ENCODE measurements at regions of chr1 and their contacts with region 1.

Region 1: GRCh38 chr1:150696590-150697524 is at the start of gene GOLPH3L:
- DNase-seq: peak; percentile 99
- ATAC-seq: peak; percentile 100
- H3K4me3 ChIP-seq: peak within 1 kb of the TSS; percentile 72
- H3K27ac ChIP-seq: peak within 1 kb of the TSS; percentile 45
- H3K4me1 ChIP-seq: peaks cover 3% of the 10 kb centered on the region; the same call in 1 of the 2 replicates
- H3K27me3 ChIP-seq: no peaks in the 10 kb centered on the region
- CTCF ChIP-seq: no peak
- EP300 ChIP-seq: no peak
- POLR2A ChIP-seq: peak; percentile 36; the same call in 1 of the 2 replicates
- RAD21 ChIP-seq: no peak
- polyA plus RNA-seq, gene GOLPH3L: 11.8 to 12.1 TPM

Region 2: DNA sequence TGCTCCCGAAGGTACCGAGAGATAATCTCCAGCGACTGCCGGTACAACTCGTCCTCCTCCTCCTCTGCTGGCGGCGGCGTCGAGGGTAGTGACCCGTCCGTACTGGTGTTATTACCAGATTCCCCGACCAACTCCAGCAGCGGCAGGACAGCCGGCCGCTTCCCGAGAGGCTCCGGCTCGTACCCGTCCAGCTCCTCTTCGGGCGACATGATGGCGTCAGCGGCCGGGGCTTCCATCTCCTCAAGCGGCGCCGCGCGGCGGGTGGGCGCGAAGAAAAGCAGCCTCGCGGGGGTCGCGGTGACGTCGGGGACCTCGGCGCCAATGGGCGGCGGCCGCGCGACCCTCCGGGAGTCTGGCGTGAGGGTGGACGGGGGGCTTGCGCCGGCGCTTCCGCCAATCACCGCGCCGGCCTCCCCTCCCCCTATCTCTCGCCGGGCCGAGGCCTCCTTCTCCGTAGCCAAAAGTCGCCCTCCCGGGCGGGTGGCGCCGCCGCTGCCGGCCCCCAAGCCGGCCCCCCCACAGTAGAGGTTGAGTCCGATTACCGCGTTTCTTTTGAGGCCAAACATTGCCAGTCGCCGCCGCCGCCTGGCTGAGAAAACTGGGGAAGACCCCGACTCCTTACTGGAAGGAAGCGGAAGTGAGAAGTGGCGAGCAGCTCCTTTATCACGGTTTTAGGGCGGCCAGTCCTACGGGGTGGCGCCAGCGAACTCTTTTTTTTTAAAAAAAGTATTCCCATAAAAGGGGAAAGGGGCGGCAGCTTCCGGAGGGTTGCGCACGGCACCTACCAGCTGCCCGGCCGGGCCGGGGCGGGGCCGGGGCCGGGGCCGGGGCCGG is 117.7 kb before region 1 on chr1 and contains the start of gene MCL1:
- CTCF ChIA-PET with region 1: no interaction called
- POLR2A ChIA-PET with region 1: interaction called, 3 read pairs
- RAD21 ChIA-PET with region 1: interaction called, 20 read pairs
- SMC1A ChIA-PET with region 1: interaction called, 5 read pairs
- in situ Hi-C with region 1: no loop called
- intact Hi-C with region 1: no loop called
- DNase-seq: peak; percentile 69
- ATAC-seq: peak; percentile 90
- H3K4me3 ChIP-seq: peak within 1 kb of the TSS; percentile 85
- H3K27ac ChIP-seq: peak within 1 kb of the TSS; percentile 96
- H3K4me1 ChIP-seq: peaks cover 3% of the 10 kb centered on the region; the same call in 1 of the 2 replicates
- H3K27me3 ChIP-seq: no peaks in the 10 kb centered on the region
- CTCF ChIP-seq: no peak
- EP300 ChIP-seq: peak in 1 of 2 experiments; percentile 47; a peak in 1 of 4 replicates
- POLR2A ChIP-seq: peak; percentile 94
- RAD21 ChIP-seq: 0 out of 2 replicates have a peak, but pooled peaks have one; percentile 15
- polyA plus RNA-seq, gene MCL1: 18.1 to 25.5 TPM

Region 3: GRCh38 chr1:150683914-150684313 is 12.9 kb before region 1 on chr1:
- CTCF ChIA-PET with region 1: interaction called, 6 read pairs
- POLR2A ChIA-PET with region 1: interaction called, 7 read pairs
- RAD21 ChIA-PET with region 1: interaction called, 5 read pairs
- SMC1A ChIA-PET with region 1: interaction called, 11 read pairs
- in situ Hi-C with region 1: no loop called
- intact Hi-C with region 1: no loop called
- DNase-seq: peak; percentile 11
- ATAC-seq: peak; percentile 69
- H3K4me3 ChIP-seq: no peak overlapping the region
- H3K27ac ChIP-seq: no peak overlapping the region; the same call in 1 of the 2 replicates
- H3K4me1 ChIP-seq: peaks cover 4% of the 10 kb centered on the region
- H3K27me3 ChIP-seq: no peaks in the 10 kb centered on the region
- CTCF ChIP-seq: no peak
- EP300 ChIP-seq: no peak
- POLR2A ChIP-seq: no peak
- RAD21 ChIP-seq: no peak

Region 4: GRCh38 chr1:150708595-150708994 is 11.7 kb after region 1 on chr1:
- CTCF ChIA-PET with region 1: interaction called, 18 read pairs
- POLR2A ChIA-PET with region 1: interaction called, 6 read pairs
- RAD21 ChIA-PET with region 1: interaction called, 9 read pairs
- SMC1A ChIA-PET with region 1: interaction called, 20 read pairs
- in situ Hi-C with region 1: no loop called
- intact Hi-C with region 1: no loop called
- DNase-seq: peak; percentile 23
- ATAC-seq: peak; percentile 99
- H3K4me3 ChIP-seq: no peak overlapping the region
- H3K27ac ChIP-seq: no peak overlapping the region
- H3K4me1 ChIP-seq: peaks cover 7% of the 10 kb centered on the region; the same call in 1 of the 2 replicates
- H3K27me3 ChIP-seq: no peaks in the 10 kb centered on the region; a peak in 1 of 4 replicates
- CTCF ChIP-seq: no peak
- EP300 ChIP-seq: peak in 1 of 2 experiments; percentile 49; a peak in 2 of 4 replicates
- POLR2A ChIP-seq: no peak
- RAD21 ChIP-seq: no peak

Region 5: DNA sequence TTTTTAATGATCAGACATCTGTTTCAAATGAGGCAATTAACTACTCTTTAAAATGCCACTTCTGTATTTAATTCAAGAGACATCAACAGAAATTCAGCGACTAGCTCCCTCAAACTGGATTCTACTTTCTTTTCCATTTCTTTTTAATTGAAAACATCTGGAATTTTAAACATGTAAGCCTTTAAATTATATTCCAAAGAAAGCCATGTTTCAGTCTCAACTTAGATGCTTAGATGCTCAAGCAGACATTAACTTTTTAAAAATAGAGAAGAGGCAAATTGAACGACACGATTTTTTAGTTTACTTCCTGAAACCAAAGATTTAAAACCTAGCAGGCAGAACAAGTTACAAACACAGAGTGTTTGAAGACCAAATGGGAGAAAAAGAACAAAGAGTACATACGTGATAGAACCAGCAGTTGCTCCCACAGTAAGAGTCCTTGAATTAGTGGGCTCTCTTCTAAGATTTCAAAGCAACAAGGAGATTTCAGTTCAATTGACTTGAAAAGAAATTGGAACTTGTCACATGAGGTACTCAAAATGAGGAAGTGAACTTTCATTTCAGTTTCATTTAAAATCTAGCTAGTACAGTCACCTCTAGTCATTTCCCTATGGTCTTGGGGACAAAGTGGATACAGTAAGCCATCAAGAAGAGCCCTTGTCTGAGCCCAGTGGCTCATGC is 68.6 kb after region 1 on chr1 and contains the start of gene CTSS:
- CTCF ChIA-PET with region 1: interaction called, 5 read pairs
- POLR2A ChIA-PET with region 1: interaction called, 6 read pairs
- RAD21 ChIA-PET with region 1: interaction called, 10 read pairs
- SMC1A ChIA-PET with region 1: interaction called, 9 read pairs
- in situ Hi-C with region 1: no loop called
- intact Hi-C with region 1: no loop called
- DNase-seq: peak; percentile 88
- ATAC-seq: peak; percentile 90
- H3K4me3 ChIP-seq: peak within 1 kb of the TSS; percentile 77
- H3K27ac ChIP-seq: peak within 1 kb of the TSS; percentile 96
- H3K4me1 ChIP-seq: peaks cover 9% of the 10 kb centered on the region
- H3K27me3 ChIP-seq: no peaks in the 10 kb centered on the region
- CTCF ChIP-seq: no peak
- EP300 ChIP-seq: no peak; a peak in 1 of 4 replicates
- POLR2A ChIP-seq: no peak
- RAD21 ChIP-seq: no peak
- polyA plus RNA-seq, gene CTSS: 68.6 to 84.8 TPM

Region 6: DNA sequence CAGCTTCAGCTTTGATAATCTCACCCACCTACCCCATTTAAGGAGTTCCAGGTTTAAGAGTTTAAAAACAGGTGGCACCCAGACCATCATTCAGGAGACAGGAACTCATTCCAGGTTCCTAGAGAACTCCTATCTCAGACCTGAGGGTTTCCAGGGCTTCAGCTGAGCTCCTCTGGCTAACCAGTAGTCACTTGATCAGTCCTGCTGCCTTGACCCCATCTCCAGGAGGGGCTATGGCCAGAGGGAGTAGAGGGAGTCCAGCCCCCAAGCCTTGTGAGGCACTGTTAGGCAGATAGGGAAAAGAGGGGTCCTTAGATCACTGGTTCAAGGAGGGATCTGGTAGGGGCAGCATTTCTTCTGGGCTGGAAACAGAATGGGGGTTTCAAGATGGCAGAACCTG is 356.1 kb after region 1 on chr1:
- CTCF ChIA-PET with region 1: no interaction called
- POLR2A ChIA-PET with region 1: no interaction called
- RAD21 ChIA-PET with region 1: no interaction called
- SMC1A ChIA-PET with region 1: no interaction called
- in situ Hi-C with region 1: no loop called
- intact Hi-C with region 1: no loop called
- DNase-seq: no peak
- ATAC-seq: no peak
- H3K4me3 ChIP-seq: no peak overlapping the region
- H3K27ac ChIP-seq: no peak overlapping the region
- H3K4me1 ChIP-seq: peaks cover 32% of the 10 kb centered on the region
- H3K27me3 ChIP-seq: no peaks in the 10 kb centered on the region
- CTCF ChIP-seq: no peak
- EP300 ChIP-seq: no peak
- POLR2A ChIP-seq: no peak
- RAD21 ChIP-seq: no peak

Measured in GM12878 (cell line).